Activated CD8-positive, alpha-beta memory T cell treated with anti-CD3 and anti-CD28 coated beads, Interleukin-2, amount 10 ng/mL, durations not matched to agents 7 days and 5 days (primary cell): ENCODE measurements at regions of chr3 and their contacts with region 1.

Region 1: GRCh38 chr3:119240591-119241434 is at the start of gene B4GALT4:
- DNase-seq: peak; percentile 85
- ATAC-seq: peak; percentile 91
- H3K4me3 Mint-ChIP-seq: peak within 1 kb of the TSS; percentile 75
- H3K27ac Mint-ChIP-seq: peak within 1 kb of the TSS; percentile 74
- H3K4me1 Mint-ChIP-seq: peaks cover 39% of the 10 kb centered on the region
- H3K27me3 Mint-ChIP-seq: no peaks in the 10 kb centered on the region
- total RNA-seq, gene B4GALT4: 9.6 to 10.9 TPM

Region 2: DNA sequence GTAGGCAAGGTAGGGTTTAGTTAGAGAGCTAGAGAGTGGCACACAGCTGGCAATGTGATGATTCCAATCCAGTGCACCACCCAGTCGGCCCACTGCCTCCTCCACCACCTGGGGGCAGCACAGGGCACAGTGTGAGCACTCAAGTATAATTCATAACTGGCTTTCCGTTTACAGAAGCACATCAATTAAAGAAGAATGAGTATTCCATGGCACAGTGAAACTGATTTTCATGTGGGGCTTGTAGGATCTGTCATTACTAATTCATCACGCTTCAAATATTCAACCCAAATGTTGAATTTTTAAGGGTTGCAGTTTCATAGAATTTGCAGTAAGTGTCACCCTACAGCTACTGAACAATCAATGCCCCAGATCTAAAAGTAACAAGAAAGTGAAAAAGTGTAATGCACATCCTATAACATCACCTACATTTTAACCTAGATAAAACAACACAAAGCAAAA is 356.0 kb before region 1 on chr3:
- CTCF ChIA-PET with region 1: interaction called, 47 read pairs
- DNase-seq: peak; percentile 80
- ATAC-seq: peak; percentile 86
- H3K4me3 Mint-ChIP-seq: no peak overlapping the region
- H3K27ac Mint-ChIP-seq: no peak overlapping the region
- H3K4me1 Mint-ChIP-seq: no peaks in the 10 kb centered on the region
- H3K27me3 Mint-ChIP-seq: peaks cover 41% of the 10 kb centered on the region

Region 3: GRCh38 chr3:119034256-119035013 is 206.4 kb before region 1 on chr3 and contains the start of gene IGSF11:
- CTCF ChIA-PET with region 1: interaction called, 12 read pairs
- DNase-seq: peak; percentile 54
- ATAC-seq: peak; percentile 95
- H3K4me3 Mint-ChIP-seq: peak within 1 kb of the TSS; percentile 66
- H3K27ac Mint-ChIP-seq: no peak within 1 kb of the TSS
- H3K4me1 Mint-ChIP-seq: peaks cover 8% of the 10 kb centered on the region
- H3K27me3 Mint-ChIP-seq: peaks cover 60% of the 10 kb centered on the region
- total RNA-seq, gene IGSF11: not detected

Region 4: DNA sequence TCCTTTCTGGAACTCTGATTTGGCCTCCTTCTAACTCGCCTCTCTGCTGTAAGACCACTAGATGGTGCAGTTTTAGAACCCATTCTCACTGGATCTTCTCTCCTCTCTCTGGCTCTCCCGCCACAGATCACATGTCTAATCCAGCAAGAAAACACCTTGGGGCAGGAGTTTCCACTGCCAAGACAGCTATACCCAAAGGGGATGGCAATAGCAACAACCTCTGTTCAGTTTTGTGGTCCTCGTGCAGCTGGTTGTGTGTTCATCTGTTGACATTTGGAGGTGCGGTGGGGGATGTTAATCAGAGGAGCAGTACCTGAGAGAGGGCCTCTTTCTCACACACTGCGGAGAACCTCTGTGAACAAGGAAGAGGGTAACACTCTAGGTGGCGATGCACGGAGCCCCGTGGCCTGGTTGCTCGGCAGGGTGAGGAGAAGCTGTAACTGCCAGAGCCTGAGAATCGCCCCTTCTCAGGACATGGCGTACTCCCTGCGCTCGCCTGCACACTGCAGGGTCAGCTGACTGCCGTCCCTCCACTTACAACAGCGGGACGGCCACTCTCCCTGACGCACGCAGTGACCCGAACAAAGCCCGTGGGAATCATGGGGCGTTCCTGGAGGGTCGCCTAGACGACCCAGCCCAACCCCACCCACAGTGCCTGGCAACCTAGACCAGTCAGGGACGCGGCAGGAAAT is 95.2 kb before region 1 on chr3 and contains the start of gene TEX55:
- CTCF ChIA-PET with region 1: interaction called, 36 read pairs
- DNase-seq: no peak
- ATAC-seq: peak; percentile 47
- H3K4me3 Mint-ChIP-seq: no peak within 1 kb of the TSS
- H3K27ac Mint-ChIP-seq: no peak within 1 kb of the TSS
- H3K4me1 Mint-ChIP-seq: peaks cover 7% of the 10 kb centered on the region
- H3K27me3 Mint-ChIP-seq: no peaks in the 10 kb centered on the region
- total RNA-seq, gene TEX55: not detected

Region 5: DNA sequence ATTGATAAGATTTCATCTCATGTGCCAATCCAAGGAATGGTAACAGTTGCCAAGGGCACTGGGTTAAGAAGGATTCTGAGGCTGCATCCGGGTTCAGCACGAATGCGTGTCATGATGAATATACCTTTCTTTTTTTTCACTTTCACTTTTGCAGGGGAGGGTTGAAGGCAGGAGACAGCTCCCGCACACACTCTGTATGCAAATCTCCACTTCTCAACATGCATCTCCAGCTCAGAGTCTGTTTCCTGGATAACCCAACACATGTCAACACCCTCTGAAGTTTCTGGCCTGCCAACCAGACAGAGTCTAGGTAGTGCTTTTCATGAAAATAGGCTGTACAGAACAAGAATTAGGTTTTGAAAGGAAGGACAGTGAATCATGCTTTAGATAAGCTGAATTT is 21.7 kb before region 1 on chr3:
- CTCF ChIA-PET with region 1: interaction called, 16 read pairs
- DNase-seq: peak; percentile 44
- ATAC-seq: peak; percentile 80
- H3K4me3 Mint-ChIP-seq: no peak overlapping the region
- H3K27ac Mint-ChIP-seq: peak overlapping the region; percentile 66
- H3K4me1 Mint-ChIP-seq: peaks cover 12% of the 10 kb centered on the region
- H3K27me3 Mint-ChIP-seq: no peaks in the 10 kb centered on the region

Region 6: DNA sequence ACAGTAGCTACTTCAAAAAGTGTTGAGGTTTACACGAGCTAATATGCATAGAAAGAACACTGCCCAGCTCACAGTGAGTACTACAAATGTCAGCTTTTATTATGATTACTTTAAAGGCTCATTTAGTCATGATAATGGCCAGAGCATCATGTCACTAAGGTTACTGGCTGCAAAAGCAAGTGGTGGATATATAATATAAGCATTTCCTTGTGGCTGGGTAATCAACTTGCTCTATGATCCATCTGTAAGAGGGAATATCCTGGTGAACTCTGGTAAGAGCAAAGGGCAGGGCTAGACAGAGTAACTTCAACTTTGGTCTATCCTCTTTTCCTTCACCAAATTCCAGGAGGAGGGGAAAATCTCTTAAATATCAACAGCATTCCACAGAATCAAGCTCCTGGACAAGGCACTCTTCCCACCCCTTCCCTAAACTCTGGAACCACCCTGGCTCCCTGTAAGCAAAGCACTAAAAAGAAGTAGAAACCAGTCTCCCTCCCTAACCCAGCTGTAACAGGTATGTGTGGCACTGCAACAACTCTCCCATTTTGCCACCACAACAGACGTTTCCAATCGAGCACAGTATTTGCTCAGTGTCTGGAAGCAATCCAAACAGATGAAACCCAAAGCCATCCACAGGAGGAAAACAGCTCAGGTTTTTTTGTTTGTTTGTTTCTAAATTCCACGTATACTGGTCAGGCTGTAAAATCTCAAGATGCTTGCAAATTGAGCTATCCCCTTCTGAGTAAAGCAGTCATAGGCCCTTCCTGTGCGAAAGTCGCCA is 13.6 kb before region 1 on chr3:
- CTCF ChIA-PET with region 1: interaction called, 16 read pairs
- DNase-seq: no peak
- ATAC-seq: no peak
- H3K4me3 Mint-ChIP-seq: no peak overlapping the region
- H3K27ac Mint-ChIP-seq: no peak overlapping the region
- H3K4me1 Mint-ChIP-seq: peaks cover 4% of the 10 kb centered on the region
- H3K27me3 Mint-ChIP-seq: no peaks in the 10 kb centered on the region

Region 7: GRCh38 chr3:119293871-119294695 is 53.3 kb after region 1 on chr3 and contains the start of gene ARHGAP31:
- CTCF ChIA-PET with region 1: interaction called, 11 read pairs
- DNase-seq: peak; percentile 84
- ATAC-seq: peak; percentile 72
- H3K4me3 Mint-ChIP-seq: peak within 1 kb of the TSS; percentile 79
- H3K27ac Mint-ChIP-seq: peak within 1 kb of the TSS; percentile 69
- H3K4me1 Mint-ChIP-seq: peaks cover 44% of the 10 kb centered on the region
- H3K27me3 Mint-ChIP-seq: peaks cover 22% of the 10 kb centered on the region
- total RNA-seq, gene ARHGAP31: 1.4 to 8.3 TPM